T-cell (primary cell): ENCODE measurements at regions of chr14 and their contacts with region 1.

Region 1: DNA sequence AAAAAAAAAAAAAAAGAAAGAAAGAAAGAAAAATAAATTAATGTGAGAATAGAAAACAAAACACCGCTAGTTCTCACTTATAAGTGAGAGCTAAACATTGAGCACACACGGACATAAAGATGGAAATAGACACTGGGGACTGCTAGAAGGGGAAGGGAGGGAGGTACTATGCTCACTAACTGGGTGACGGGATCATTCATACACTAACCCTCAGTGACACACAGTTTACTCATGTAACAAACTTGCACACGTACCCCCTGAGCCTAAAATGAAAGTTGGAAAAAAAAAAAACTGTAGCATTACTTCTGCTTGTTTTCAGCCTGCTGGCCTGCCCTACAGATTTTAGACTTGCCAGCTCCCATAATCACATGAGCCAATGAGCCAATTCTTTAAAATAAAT is 10.5 kb upstream of the PRMT5 start:
- DNase-seq: no peak
- ATAC-seq: no peak
- H3K4me3 ChIP-seq: no peak overlapping the region
- H3K4me3 Mint-ChIP-seq: no peak overlapping the region
- H3K27ac ChIP-seq: no peak overlapping the region
- H3K27ac Mint-ChIP-seq: no peak overlapping the region
- H3K4me1 ChIP-seq: no peaks in the 10 kb centered on the region
- H3K4me1 Mint-ChIP-seq: no peaks in the 10 kb centered on the region
- H3K27me3 ChIP-seq: no peaks in the 10 kb centered on the region
- H3K27me3 Mint-ChIP-seq: no peaks in the 10 kb centered on the region

Region 2: DNA sequence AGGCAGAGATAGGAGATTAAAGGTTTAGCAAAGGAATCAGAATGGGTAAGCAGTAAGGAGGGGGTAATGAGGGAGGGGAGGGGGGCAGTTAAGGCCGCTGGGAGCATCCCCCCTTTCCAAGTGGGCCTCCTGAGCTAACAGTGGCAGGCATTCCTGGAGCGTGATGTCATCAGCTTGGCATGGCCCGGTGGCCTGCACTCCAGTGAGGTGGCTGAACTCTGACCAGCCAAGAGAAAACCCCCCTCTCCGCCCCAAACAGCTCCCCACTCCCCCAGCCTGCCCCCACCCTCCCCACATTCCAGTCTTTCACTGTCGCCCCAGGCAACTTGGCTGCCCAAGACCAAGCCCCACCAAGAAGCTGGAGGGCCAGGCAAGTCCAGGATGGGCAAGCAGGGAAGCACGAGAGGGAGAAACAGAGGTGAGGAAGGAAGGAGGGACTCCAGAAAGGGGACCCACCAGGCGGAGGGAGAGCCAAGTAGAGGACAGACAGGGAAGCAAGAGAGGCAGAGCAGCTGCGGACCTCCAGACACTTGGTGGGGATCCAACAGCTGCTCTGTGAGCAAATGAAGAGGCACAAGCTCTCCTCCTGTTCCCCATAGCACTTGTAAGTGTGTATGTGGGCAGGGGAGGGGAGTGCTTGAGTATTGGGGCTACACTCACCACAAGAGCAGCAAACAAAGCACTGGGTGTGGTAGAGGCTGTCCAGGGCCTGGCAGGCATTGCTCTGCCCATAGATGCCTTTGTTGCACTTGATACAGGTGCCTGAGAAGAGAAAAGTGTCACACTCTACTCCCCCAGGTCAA is 38.2 kb after region 1 on chr14:
- CTCF ChIA-PET with region 1: no interaction called
- POLR2A ChIA-PET with region 1: no interaction called
- DNase-seq: no peak
- ATAC-seq: no peak
- H3K4me3 ChIP-seq: no peak overlapping the region
- H3K4me3 Mint-ChIP-seq: peak overlapping the region in 1 of 3 donors; percentile 17
- H3K27ac ChIP-seq: no peak overlapping the region
- H3K27ac Mint-ChIP-seq: no peak overlapping the region
- H3K4me1 ChIP-seq: peaks cover 2 to 30% of the 10 kb centered on the region in 2 experiments
- H3K4me1 Mint-ChIP-seq: peaks cover 8 to 11% (median 9%) of the 10 kb centered on the region in 3 donors
- H3K27me3 ChIP-seq: peaks cover 0 to 26% of the 10 kb centered on the region in 2 experiments
- H3K27me3 Mint-ChIP-seq: no peaks in the 10 kb centered on the region

Region 3: GRCh38 chr14:23095196-23096108 is 155.8 kb after region 1 on chr14 and contains the start of gene C14orf119:
- CTCF ChIA-PET with region 1: no interaction called
- POLR2A ChIA-PET with region 1: no interaction called
- DNase-seq: peak in 34 of 35 experiments; percentile 98 to 100 (median 99)
- ATAC-seq: peak; percentile 87 to 89 (median 88)
- H3K4me3 ChIP-seq: peak within 1 kb of the TSS; percentile 77 to 91
- H3K4me3 Mint-ChIP-seq: no peak within 1 kb of the TSS
- H3K27ac ChIP-seq: peak within 1 kb of the TSS; percentile 94
- H3K27ac Mint-ChIP-seq: no peak within 1 kb of the TSS
- H3K4me1 ChIP-seq: peaks cover 18 to 23% of the 10 kb centered on the region in 2 experiments
- H3K4me1 Mint-ChIP-seq: peaks cover 26 to 55% (median 32%) of the 10 kb centered on the region in 3 donors
- H3K27me3 ChIP-seq: no peaks in the 10 kb centered on the region
- H3K27me3 Mint-ChIP-seq: no peaks in the 10 kb centered on the region
- total RNA-seq, gene C14orf119: 9.5 to 47.7 (median 43.6) TPM

Region 4: GRCh38 chr14:23408307-23408630 is 468.6 kb after region 1 on chr14:
- CTCF ChIA-PET with region 1: no interaction called
- POLR2A ChIA-PET with region 1: interaction called in 1 of 2 experiments, 11 read pairs
- DNase-seq: no peak
- ATAC-seq: no peak
- H3K4me3 ChIP-seq: no peak overlapping the region
- H3K4me3 Mint-ChIP-seq: no peak overlapping the region
- H3K27ac ChIP-seq: no peak overlapping the region
- H3K27ac Mint-ChIP-seq: no peak overlapping the region
- H3K4me1 ChIP-seq: no peaks in the 10 kb centered on the region
- H3K4me1 Mint-ChIP-seq: no peaks in the 10 kb centered on the region
- H3K27me3 ChIP-seq: peaks cover 0 to 53% of the 10 kb centered on the region in 2 experiments
- H3K27me3 Mint-ChIP-seq: peaks cover 18 to 35% of the 10 kb centered on the region in 2 donors